ENCODE measurements at regions of chr16 and their contacts with region 1.

Region 1: GRCh38 chr16:4511441-4512082 is 27.0 kb downstream of the CDIP1 start:
- DNase-seq: peak; percentile 43 to 44
- H3K4me3 ChIP-seq: no peak overlapping the region
- H3K27ac ChIP-seq: no peak overlapping the region
- H3K4me1 ChIP-seq: peaks cover 16 to 44% of the 10 kb centered on the region in 2 donors
- H3K27me3 ChIP-seq: no peaks in the 10 kb centered on the region
- CTCF ChIP-seq: peak in 4 of 6 experiments; percentile 20 to 35 (median 22)
- POLR2A ChIP-seq: no peak

Region 2: DNA sequence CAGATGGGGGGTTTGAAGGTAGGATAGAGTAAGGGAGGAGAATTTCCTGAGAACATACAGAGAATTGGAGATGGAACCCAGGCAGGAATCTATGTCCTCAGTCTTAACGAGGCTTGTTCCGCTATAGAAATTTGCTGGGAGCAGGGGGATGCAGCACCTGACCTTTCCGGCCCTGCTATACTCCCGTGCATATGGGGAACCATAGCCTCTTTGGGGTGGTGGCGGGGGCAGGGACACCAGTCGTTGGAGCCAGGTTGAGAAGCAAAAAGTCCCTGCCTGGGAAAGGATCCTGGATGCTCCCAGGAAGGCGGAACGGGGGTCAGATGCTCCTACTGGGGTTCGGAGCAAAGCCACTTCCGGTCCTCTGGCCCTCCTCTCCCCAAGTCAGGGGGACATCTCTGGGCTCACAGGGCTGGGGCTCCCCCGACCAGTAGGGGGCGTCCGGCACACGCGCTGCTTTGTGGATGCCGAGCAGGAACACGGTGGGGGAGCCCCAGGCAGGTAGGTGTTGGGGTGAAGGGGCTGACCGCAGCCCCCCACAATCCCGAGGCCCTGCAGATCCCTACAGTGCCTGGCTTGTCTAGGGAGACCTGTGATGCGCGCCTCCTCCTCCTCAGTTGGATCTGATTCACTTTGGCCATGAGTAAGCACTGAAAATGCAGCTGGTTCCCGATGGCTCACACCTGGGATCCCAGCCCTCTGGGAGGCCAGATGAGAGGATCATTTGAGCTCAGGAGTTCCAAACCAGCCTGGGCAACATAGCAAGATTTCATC is 223.2 kb before region 1 on chr16:
- intact Hi-C with region 1: no loop called
- DNase-seq: peak; percentile 75 to 76
- H3K4me3 ChIP-seq: no peak overlapping the region
- H3K27ac ChIP-seq: no peak overlapping the region
- H3K4me1 ChIP-seq: peaks cover 5 to 19% of the 10 kb centered on the region in 2 donors
- H3K27me3 ChIP-seq: no peaks in the 10 kb centered on the region
- CTCF ChIP-seq: peak; percentile 90 to 96 (median 92)
- POLR2A ChIP-seq: no peak

Region 3: DNA sequence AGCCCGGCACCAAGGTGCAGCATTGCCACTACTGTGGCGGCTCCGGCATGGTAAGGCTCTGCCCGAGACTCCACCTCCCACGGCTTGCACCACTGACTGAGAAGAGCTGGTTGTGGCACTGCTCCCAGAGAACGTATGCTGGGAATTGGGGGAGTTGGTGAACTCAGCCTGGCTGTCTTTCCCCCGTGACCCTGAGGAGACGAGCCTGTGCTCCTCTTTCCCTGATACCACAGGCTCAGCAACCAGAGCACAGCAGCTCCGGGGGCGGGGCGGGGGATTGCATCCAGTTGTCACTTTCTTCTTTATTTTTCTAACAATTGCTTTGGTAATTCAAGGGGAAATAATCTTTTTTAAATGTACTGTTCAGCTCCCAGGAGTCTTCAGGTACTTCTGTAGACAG is 69.2 kb before region 1 on chr16:
- intact Hi-C with region 1: no loop called
- DNase-seq: no peak
- H3K4me3 ChIP-seq: no peak overlapping the region
- H3K27ac ChIP-seq: no peak overlapping the region
- H3K4me1 ChIP-seq: no peaks in the 10 kb centered on the region
- H3K27me3 ChIP-seq: no peaks in the 10 kb centered on the region
- CTCF ChIP-seq: no peak
- POLR2A ChIP-seq: no peak

Region 4: GRCh38 chr16:4548124-4548523 is 36.6 kb after region 1 on chr16:
- intact Hi-C with region 1: loop called (anchors 5 kb)
- DNase-seq: no peak
- H3K4me3 ChIP-seq: no peak overlapping the region
- H3K27ac ChIP-seq: no peak overlapping the region
- H3K4me1 ChIP-seq: no peaks in the 10 kb centered on the region
- H3K27me3 ChIP-seq: no peaks in the 10 kb centered on the region
- CTCF ChIP-seq: no peak
- POLR2A ChIP-seq: no peak

Measured in thyroid gland (tissue), 4 donors.